ENCODE measurements at regions of chr14 and their contacts with region 1.

Region 1: DNA sequence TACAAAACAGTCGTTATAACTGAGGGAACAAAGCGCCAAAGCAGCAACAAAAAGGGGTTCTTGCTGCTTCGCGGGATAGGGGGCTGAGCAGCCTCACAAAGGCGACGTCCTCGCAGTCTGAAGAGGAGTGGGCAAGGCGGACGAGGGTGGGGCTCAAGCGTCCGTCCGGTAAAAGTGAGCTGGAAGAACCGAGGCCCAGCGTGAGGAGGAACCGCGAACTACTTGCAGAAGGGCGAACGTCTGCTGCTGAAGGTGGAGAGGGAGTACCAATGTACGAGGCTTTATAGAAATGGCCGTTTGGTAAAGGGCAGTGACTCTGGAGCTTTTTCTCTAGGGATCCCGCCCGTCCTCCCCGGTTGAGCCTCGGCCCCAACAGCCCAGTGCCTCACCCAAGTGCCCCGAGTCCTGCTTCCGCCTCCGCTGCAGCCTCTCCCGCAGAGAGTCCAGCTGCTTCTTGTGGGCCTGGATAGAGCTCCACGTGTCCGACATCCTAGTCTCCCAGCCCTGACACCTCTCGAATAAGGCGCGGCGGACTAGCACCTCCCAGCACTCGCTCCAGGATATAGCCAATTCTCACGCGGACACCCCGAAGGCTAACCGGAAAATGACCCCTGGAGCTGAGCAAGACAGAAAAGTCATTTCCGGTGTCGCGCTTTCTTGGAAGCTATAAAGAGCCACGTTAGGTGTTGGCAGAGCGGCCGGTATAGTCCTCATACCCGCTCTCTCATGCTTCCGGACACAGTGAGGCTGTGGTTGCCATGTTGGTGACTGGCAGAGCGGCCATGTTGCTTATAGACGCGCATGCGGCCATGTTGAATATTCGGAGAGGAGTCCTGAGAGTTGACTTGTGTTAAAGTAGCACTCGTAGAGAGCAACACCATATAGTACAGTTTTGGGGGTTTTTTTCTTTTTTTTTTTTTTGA is at the start of gene METTL3:
- DNase-seq: peak; percentile 95
- ATAC-seq: peak; percentile 99
- H3K4me3 ChIP-seq: peak within 1 kb of the TSS; percentile 76 to 99 (median 96)
- H3K4me3 Mint-ChIP-seq: peak within 1 kb of the TSS; percentile 100
- H3K27ac ChIP-seq: peak within 1 kb of the TSS; percentile 81 to 90
- H3K27ac Mint-ChIP-seq: peak within 1 kb of the TSS; percentile 97
- H3K4me1 ChIP-seq: peaks cover 14 to 22% of the 10 kb centered on the region in 2 donors
- H3K4me1 Mint-ChIP-seq: peaks cover 40% of the 10 kb centered on the region
- H3K27me3 ChIP-seq: no peaks in the 10 kb centered on the region
- H3K27me3 Mint-ChIP-seq: peaks cover 4% of the 10 kb centered on the region
- CTCF ChIP-seq: no peak
- total RNA-seq, gene METTL3: 118 and 124 TPM in 2 replicates

Region 2: DNA sequence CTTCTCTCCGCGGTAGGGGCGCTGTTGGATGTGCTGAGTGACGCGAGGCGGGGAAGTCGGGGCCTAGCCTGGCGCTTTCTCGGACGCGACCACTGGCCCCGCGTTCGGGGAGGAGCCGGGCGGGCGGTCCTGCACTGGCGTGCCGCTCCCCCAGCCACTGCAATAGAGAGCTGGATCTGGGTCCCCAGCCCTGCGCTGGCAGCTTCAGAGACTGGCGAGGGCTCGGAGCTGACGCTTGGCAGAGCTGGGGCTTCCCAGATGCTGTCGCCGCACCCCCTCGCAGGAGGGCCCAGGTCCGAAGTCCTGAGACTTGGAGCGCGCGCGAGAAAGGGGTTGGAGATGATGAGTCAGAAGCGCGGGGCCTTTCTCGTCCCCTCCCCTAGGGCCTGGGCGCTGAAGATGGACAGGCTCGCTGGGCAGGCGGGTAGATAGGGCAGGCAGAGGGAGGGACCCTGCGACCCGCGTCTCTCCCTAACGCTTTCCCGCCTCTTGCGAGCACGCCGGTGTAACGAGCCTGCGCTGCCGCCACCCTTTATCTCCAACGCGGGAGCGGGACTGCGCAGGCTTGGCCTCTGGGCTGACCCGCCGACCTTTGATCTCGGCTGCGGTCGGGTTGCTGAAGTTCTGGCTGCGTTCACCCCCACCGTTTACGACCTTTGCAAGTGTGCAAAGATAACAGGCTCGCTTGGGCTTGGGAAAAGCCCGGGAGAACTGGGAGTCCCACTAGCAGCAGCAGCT is 407.1 kb before region 1 on chr14:
- CTCF ChIA-PET with region 1: no interaction called
- POLR2A ChIA-PET with region 1: no interaction called
- intact Hi-C with region 1: loop called (anchors 1 kb)
- DNase-seq: peak; percentile 97
- ATAC-seq: peak; percentile 86
- H3K4me3 ChIP-seq: peak overlapping the region; percentile 72 to 92 (median 84)
- H3K4me3 Mint-ChIP-seq: peak overlapping the region; percentile 78
- H3K27ac ChIP-seq: peak overlapping the region; percentile 93 to 96
- H3K27ac Mint-ChIP-seq: peak overlapping the region; percentile 96
- H3K4me1 ChIP-seq: peaks cover 17 to 25% of the 10 kb centered on the region in 2 donors
- H3K4me1 Mint-ChIP-seq: peaks cover 15% of the 10 kb centered on the region
- H3K27me3 ChIP-seq: peaks cover 0 to 25% (median 15%) of the 10 kb centered on the region in 4 experiments
- H3K27me3 Mint-ChIP-seq: peaks cover 26% of the 10 kb centered on the region
- CTCF ChIP-seq: peak; percentile 76

Region 3: GRCh38 chr14:21437063-21437901 is 73.7 kb before region 1 on chr14:
- CTCF ChIA-PET with region 1: no interaction called
- POLR2A ChIA-PET with region 1: interaction called, 12 read pairs
- intact Hi-C with region 1: loop called (anchors 1 kb)
- DNase-seq: peak; percentile 99
- ATAC-seq: peak; percentile 100
- H3K4me3 ChIP-seq: peak overlapping the region; percentile 79 to 96 (median 89)
- H3K4me3 Mint-ChIP-seq: peak overlapping the region; percentile 90
- H3K27ac ChIP-seq: peak overlapping the region; percentile 76 to 93
- H3K27ac Mint-ChIP-seq: peak overlapping the region; percentile 90
- H3K4me1 ChIP-seq: peaks cover 12 to 25% of the 10 kb centered on the region in 2 donors
- H3K4me1 Mint-ChIP-seq: peaks cover 53% of the 10 kb centered on the region
- H3K27me3 ChIP-seq: no peaks in the 10 kb centered on the region
- H3K27me3 Mint-ChIP-seq: no peaks in the 10 kb centered on the region
- CTCF ChIP-seq: no peak

Region 4: GRCh38 chr14:21476925-21477681 is 33.9 kb before region 1 on chr14 and contains the starts of genes RAB2B and TOX4:
- CTCF ChIA-PET with region 1: interaction called, 10 read pairs
- POLR2A ChIA-PET with region 1: interaction called, 10 read pairs
- intact Hi-C with region 1: loop called (anchors 1 kb)
- DNase-seq: peak; percentile 98
- ATAC-seq: peak; percentile 98
- H3K4me3 ChIP-seq: peak within 1 kb of the TSS; percentile 77 to 99 (median 83)
- H3K4me3 Mint-ChIP-seq: peak within 1 kb of the TSS; percentile 98
- H3K27ac ChIP-seq: peak within 1 kb of the TSS; percentile 70 to 94
- H3K27ac Mint-ChIP-seq: peak within 1 kb of the TSS; percentile 94
- H3K4me1 ChIP-seq: peaks cover 15 to 21% of the 10 kb centered on the region in 2 donors
- H3K4me1 Mint-ChIP-seq: peaks cover 33% of the 10 kb centered on the region
- H3K27me3 ChIP-seq: no peaks in the 10 kb centered on the region
- H3K27me3 Mint-ChIP-seq: no peaks in the 10 kb centered on the region
- CTCF ChIP-seq: peak; percentile 88
- total RNA-seq, gene RAB2B: 46.5 and 46.8 TPM in 2 replicates
- total RNA-seq, gene TOX4: 74.1 and 83.2 TPM in 2 replicates

Region 5: GRCh38 chr14:21557084-21557901 is 46.3 kb after region 1 on chr14:
- CTCF ChIA-PET with region 1: no interaction called
- POLR2A ChIA-PET with region 1: no interaction called
- intact Hi-C with region 1: loop called (anchors 2 kb)
- DNase-seq: peak; percentile 88
- ATAC-seq: peak; percentile 53
- H3K4me3 ChIP-seq: peak overlapping the region in 3 of 5 experiments; percentile 1 to 45 (median 31)
- H3K4me3 Mint-ChIP-seq: peak overlapping the region; percentile 26
- H3K27ac ChIP-seq: no peak overlapping the region
- H3K27ac Mint-ChIP-seq: no peak overlapping the region
- H3K4me1 ChIP-seq: peaks cover 5% of the 10 kb centered on the region in 2 donors
- H3K4me1 Mint-ChIP-seq: peaks cover 6% of the 10 kb centered on the region
- H3K27me3 ChIP-seq: no peaks in the 10 kb centered on the region
- H3K27me3 Mint-ChIP-seq: peaks cover 3% of the 10 kb centered on the region
- CTCF ChIP-seq: peak; percentile 81

Measured in B cell (primary cell).